A673 (cell line): ENCODE measurements at regions of chr14 and their contacts with region 1.

Region 1: GRCh38 chr14:61025251-61026223 is 44.5 kb downstream of the SLC38A6 start:
- DNase-seq: peak; percentile 88
- H3K4me3 ChIP-seq: no peak overlapping the region
- H3K27ac ChIP-seq: peak overlapping the region; percentile 69
- H3K4me1 ChIP-seq: peaks cover 46% of the 10 kb centered on the region
- H3K27me3 ChIP-seq: no peaks in the 10 kb centered on the region
- CTCF ChIP-seq: peak; percentile 95

Region 2: GRCh38 chr14:60622917-60623257 is 402.6 kb before region 1 on chr14:
- CTCF ChIA-PET with region 1: interaction called, 7 read pairs
- POLR2A ChIA-PET with region 1: no interaction called
- intact Hi-C with region 1: loop called (anchors 2 kb)
- DNase-seq: no peak
- H3K4me3 ChIP-seq: no peak overlapping the region
- H3K27ac ChIP-seq: no peak overlapping the region
- H3K4me1 ChIP-seq: peaks cover 3% of the 10 kb centered on the region
- H3K27me3 ChIP-seq: no peaks in the 10 kb centered on the region
- CTCF ChIP-seq: no peak

Region 3: GRCh38 chr14:60724137-60724619 is 301.4 kb before region 1 on chr14 and contains the start of gene SIX4:
- CTCF ChIA-PET with region 1: no interaction called
- POLR2A ChIA-PET with region 1: no interaction called
- intact Hi-C with region 1: loop called (anchors 5 kb)
- DNase-seq: peak; percentile 84
- H3K4me3 ChIP-seq: peak within 1 kb of the TSS; percentile 84
- H3K27ac ChIP-seq: peak within 1 kb of the TSS; percentile 79
- H3K4me1 ChIP-seq: peaks cover 9% of the 10 kb centered on the region
- H3K27me3 ChIP-seq: no peaks in the 10 kb centered on the region
- CTCF ChIP-seq: no peak
- total RNA-seq, gene SIX4: 13.6 and 16.0 TPM in 2 replicates

Region 4: GRCh38 chr14:61051621-61052020 is 26.1 kb after region 1 on chr14:
- CTCF ChIA-PET with region 1: no interaction called
- POLR2A ChIA-PET with region 1: no interaction called
- intact Hi-C with region 1: no loop called
- DNase-seq: no peak
- H3K4me3 ChIP-seq: no peak overlapping the region
- H3K27ac ChIP-seq: no peak overlapping the region
- H3K4me1 ChIP-seq: peaks cover 24% of the 10 kb centered on the region
- H3K27me3 ChIP-seq: no peaks in the 10 kb centered on the region
- CTCF ChIP-seq: no peak

Region 5: GRCh38 chr14:61125867-61126572 is 100.5 kb after region 1 on chr14:
- CTCF ChIA-PET with region 1: no interaction called
- POLR2A ChIA-PET with region 1: no interaction called
- intact Hi-C with region 1: no loop called
- DNase-seq: no peak
- H3K4me3 ChIP-seq: no peak overlapping the region
- H3K27ac ChIP-seq: no peak overlapping the region
- H3K4me1 ChIP-seq: peaks cover 13% of the 10 kb centered on the region
- H3K27me3 ChIP-seq: no peaks in the 10 kb centered on the region
- CTCF ChIP-seq: no peak